Naive thymus-derived CD4-positive, alpha-beta T cell (primary cell): ENCODE measurements at regions of chr11 and their contacts with region 1.

Region 1: DNA sequence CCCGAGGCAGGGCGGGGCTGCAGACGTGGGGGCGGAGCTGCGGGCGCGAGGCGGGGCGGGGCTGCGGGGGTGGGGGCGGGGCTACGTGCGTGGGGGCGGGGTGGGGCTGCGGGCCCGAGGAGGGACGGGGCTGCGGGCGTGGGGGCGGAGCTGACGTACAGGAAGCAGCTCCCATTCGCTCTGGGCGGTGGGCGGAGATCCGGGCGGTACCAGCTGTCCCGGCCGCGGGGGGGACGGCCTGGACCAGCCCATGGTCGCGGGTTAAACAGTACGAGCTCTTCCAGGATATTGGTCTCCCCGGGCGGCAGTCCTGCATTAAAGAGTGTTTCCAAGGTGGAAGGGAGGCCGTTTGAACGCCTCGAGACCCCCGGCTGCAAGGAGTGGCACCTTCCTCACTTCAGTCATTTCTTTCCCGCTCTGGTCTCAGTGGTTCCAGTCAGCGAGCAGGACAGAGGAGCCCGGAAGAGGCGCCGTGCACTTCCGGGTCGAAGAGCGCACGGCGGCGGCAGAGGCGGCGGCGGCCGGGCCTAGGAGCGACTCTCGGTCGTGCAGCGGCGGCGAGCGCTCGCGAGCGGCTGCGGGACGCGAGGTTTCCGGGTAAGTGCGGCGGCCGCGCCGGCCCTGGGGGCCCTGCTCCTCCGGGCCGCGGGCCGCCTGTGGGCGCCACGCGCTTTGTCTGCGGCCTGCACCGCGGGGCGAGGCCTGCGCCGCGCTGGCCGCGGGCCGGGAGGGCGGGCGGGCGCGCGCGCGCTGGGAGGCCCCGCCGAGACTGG is at the start of gene PHRF1:
- DNase-seq: peak; percentile 93 to 99 (median 97)
- ATAC-seq: peak; percentile 93
- H3K4me3 ChIP-seq: peak within 1 kb of the TSS; percentile 98
- H3K4me3 Mint-ChIP-seq: peak within 1 kb of the TSS; percentile 93 to 99 (median 98)
- H3K27ac ChIP-seq: peak within 1 kb of the TSS; percentile 98
- H3K27ac Mint-ChIP-seq: peak within 1 kb of the TSS; percentile 96 to 100 (median 99)
- H3K4me1 ChIP-seq: peaks cover 26 to 44% of the 10 kb centered on the region in 2 donors
- H3K4me1 Mint-ChIP-seq: peaks cover 42 to 60% (median 46%) of the 10 kb centered on the region in 7 donors
- H3K27me3 ChIP-seq: no peaks in the 10 kb centered on the region
- H3K27me3 Mint-ChIP-seq: peaks cover 0 to 9% (median 0%) of the 10 kb centered on the region in 5 donors
- total RNA-seq, gene PHRF1: 47.3 to 55.2 (median 49.4) TPM

Region 2: DNA sequence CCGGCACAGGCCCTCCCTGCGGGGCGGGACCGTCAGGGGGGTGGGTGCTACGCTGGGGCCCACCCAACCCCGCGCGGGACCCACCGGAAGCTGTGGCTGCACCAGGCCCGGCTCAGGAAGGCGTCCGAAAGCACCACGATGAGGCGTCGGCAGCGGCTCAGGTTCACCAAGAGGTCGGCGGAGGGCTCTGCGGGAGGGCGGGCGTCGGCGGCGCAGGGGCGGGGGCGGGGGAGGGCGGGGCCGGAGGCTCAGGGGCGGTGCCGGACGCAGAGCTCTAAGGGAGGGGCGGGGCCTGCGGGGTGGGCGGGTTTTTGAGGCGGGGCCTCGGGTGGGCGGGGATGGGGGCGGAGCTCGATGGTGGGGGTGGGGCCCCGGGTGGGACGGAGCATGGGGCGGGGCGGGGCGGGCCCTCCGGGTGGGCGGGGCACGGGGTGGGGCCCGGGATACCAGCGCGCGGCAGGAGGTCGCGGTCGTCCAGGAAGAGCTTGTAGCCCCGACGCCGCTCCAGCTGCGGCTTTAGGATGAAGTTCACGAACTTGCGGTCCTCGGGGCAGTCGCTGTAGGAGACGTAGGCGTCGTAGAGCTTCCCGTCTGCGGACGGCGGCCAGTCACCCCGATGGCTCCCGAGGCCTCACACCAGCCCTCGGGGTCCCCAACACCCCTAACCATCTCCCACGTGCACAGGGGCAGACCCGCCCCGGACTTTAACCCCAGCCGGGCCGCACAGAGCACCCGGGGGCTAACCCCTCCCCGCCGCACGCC is 169.0 kb before region 1 on chr11:
- CTCF ChIA-PET with region 1: no interaction called
- POLR2A ChIA-PET with region 1: no interaction called
- intact Hi-C with region 1: loop called in 1 of 2 experiments (anchors 1 kb)
- DNase-seq: peak; percentile 80 to 93 (median 92)
- ATAC-seq: peak; percentile 90
- H3K4me3 ChIP-seq: no peak overlapping the region
- H3K4me3 Mint-ChIP-seq: peak overlapping the region in 6 of 10 donors; percentile 12 to 60 (median 38)
- H3K27ac ChIP-seq: peak overlapping the region; percentile 75
- H3K27ac Mint-ChIP-seq: peak overlapping the region in 7 of 9 donors; percentile 21 to 85 (median 51)
- H3K4me1 ChIP-seq: peaks cover 9 to 13% of the 10 kb centered on the region in 2 donors
- H3K4me1 Mint-ChIP-seq: peaks cover 4 to 21% (median 6%) of the 10 kb centered on the region in 7 donors
- H3K27me3 ChIP-seq: no peaks in the 10 kb centered on the region
- H3K27me3 Mint-ChIP-seq: no peaks in the 10 kb centered on the region

Region 3: GRCh38 chr11:544837-545166 is 31.4 kb before region 1 on chr11:
- CTCF ChIA-PET with region 1: no interaction called
- POLR2A ChIA-PET with region 1: no interaction called
- intact Hi-C with region 1: no loop called
- DNase-seq: no peak
- ATAC-seq: no peak
- H3K4me3 ChIP-seq: no peak overlapping the region
- H3K4me3 Mint-ChIP-seq: no peak overlapping the region
- H3K27ac ChIP-seq: no peak overlapping the region
- H3K27ac Mint-ChIP-seq: no peak overlapping the region
- H3K4me1 ChIP-seq: no peaks in the 10 kb centered on the region
- H3K4me1 Mint-ChIP-seq: peaks cover 0 to 4% (median 0%) of the 10 kb centered on the region in 7 donors
- H3K27me3 ChIP-seq: no peaks in the 10 kb centered on the region
- H3K27me3 Mint-ChIP-seq: no peaks in the 10 kb centered on the region

Region 4: DNA sequence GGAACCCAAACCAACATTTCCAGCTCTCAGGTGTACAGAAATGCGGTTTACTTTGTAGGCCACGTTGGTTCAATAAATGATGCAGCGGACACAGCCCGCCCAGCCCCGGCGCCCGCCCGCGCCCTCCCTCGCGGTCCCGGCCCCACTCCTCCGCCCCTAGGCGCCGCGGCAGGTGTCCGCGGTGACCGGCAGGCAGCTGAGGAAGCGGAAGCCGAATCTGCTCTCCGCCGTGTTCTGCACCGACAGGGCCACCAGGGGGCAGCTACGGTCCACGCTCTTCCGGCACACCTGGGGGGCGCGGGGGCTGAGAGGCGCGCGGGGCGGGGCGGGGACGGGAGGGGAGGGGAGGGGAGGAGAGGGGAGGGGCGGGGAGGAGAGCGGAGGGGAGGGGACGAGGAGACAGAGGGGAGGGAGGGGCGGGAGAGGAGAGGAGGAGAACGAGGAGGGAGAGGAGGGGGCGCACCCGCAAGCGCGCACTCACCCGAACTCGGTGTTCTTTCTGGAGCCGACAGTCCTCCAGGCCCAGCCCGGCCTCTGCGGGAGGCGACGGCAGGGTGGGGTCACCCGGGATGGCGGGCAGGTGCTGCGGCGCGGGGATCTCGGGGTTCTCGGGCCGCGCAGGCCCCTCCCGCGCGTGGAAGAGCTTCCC is 21.2 kb before region 1 on chr11:
- CTCF ChIA-PET with region 1: interaction called, 8 read pairs
- POLR2A ChIA-PET with region 1: interaction called, 16 read pairs
- intact Hi-C with region 1: loop called (anchors 1 kb)
- DNase-seq: peak; percentile 60 to 80 (median 72)
- ATAC-seq: peak; percentile 89
- H3K4me3 ChIP-seq: peak overlapping the region; percentile 46
- H3K4me3 Mint-ChIP-seq: peak overlapping the region in 7 of 10 donors; percentile 36 to 69 (median 57)
- H3K27ac ChIP-seq: peak overlapping the region; percentile 44
- H3K27ac Mint-ChIP-seq: no peak overlapping the region
- H3K4me1 ChIP-seq: peaks cover 9 to 16% of the 10 kb centered on the region in 2 donors
- H3K4me1 Mint-ChIP-seq: peaks cover 3 to 8% (median 7%) of the 10 kb centered on the region in 7 donors
- H3K27me3 ChIP-seq: no peaks in the 10 kb centered on the region
- H3K27me3 Mint-ChIP-seq: peaks cover 0 to 18% (median 0%) of the 10 kb centered on the region in 5 donors

Region 5: GRCh38 chr11:587978-588380 is 11.8 kb after region 1 on chr11:
- CTCF ChIA-PET with region 1: interaction called, 3 read pairs
- POLR2A ChIA-PET with region 1: interaction called, 8 read pairs
- intact Hi-C with region 1: loop called (anchors 1 kb)
- DNase-seq: peak; percentile 34 to 91 (median 78)
- ATAC-seq: peak; percentile 93
- H3K4me3 ChIP-seq: peak overlapping the region; percentile 16
- H3K4me3 Mint-ChIP-seq: peak overlapping the region; percentile 63 to 90 (median 76)
- H3K27ac ChIP-seq: peak overlapping the region; percentile 65
- H3K27ac Mint-ChIP-seq: peak overlapping the region; percentile 95 to 100 (median 99)
- H3K4me1 ChIP-seq: peaks cover 10 to 12% of the 10 kb centered on the region in 2 donors
- H3K4me1 Mint-ChIP-seq: peaks cover 9 to 38% (median 29%) of the 10 kb centered on the region in 7 donors
- H3K27me3 ChIP-seq: no peaks in the 10 kb centered on the region
- H3K27me3 Mint-ChIP-seq: no peaks in the 10 kb centered on the region

Region 6: GRCh38 chr11:760236-760635 is 184.1 kb after region 1 on chr11:
- CTCF ChIA-PET with region 1: no interaction called
- POLR2A ChIA-PET with region 1: no interaction called
- intact Hi-C with region 1: no loop called
- DNase-seq: no peak
- ATAC-seq: no peak
- H3K4me3 ChIP-seq: no peak overlapping the region
- H3K4me3 Mint-ChIP-seq: no peak overlapping the region
- H3K27ac ChIP-seq: no peak overlapping the region
- H3K27ac Mint-ChIP-seq: peak overlapping the region in 1 of 9 donors; percentile 29
- H3K4me1 ChIP-seq: no peaks in the 10 kb centered on the region
- H3K4me1 Mint-ChIP-seq: peaks cover 0 to 6% (median 0%) of the 10 kb centered on the region in 7 donors
- H3K27me3 ChIP-seq: no peaks in the 10 kb centered on the region
- H3K27me3 Mint-ChIP-seq: no peaks in the 10 kb centered on the region

Region 7: DNA sequence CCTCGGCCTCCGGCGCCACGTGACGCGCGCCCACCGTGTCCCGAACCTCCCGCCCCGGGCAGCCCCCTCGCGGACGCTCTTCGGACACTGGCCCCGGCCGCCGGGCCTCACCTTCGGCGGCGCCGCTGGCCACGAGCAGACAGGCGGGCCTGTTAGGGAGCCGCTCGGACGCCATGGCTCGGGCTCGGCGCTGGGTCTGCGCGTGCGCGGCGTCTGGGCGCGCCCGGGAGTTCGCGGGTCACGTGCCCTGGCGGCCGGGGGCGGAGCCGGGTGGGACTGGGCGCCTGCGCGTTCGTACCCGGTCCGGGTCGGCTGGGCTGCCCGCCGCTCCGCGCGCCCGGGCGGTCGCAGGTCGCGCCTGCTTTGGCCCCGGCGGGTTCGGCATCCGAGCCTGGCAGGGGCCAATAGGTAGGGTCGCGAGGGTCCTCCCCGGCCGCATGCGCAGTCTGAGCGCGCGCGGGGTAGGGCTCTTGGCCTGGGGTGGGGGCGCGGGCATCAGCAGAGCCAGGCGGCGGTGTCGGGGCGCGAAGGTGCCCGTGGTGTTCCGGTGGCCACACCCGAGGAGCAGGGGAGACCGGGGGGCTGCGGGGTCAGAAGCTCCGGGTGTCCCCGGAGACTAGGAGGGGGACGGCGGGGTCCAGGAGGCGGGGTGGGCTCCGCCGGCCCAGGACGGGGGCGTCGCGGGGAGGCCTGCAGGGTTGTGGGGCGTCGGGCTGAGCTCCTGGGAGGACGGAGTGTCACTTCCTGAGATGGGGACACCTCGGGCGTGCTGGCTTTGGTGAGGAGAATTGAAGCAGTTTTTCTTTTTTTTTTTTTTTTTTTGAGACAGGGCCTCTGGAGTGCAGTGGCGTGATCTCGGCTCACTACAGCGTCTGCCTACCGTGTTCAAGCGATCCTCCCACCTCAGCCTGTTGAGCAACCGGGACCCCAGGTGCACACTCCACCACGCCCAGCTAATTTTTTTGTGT is 201.4 kb after region 1 on chr11 and contains the start of gene GATD1:
- CTCF ChIA-PET with region 1: no interaction called
- POLR2A ChIA-PET with region 1: no interaction called
- intact Hi-C with region 1: loop called in 1 of 2 experiments (anchors 2 kb)
- DNase-seq: peak; percentile 86 to 99 (median 93)
- ATAC-seq: peak; percentile 93
- H3K4me3 ChIP-seq: peak within 1 kb of the TSS; percentile 59
- H3K4me3 Mint-ChIP-seq: peak within 1 kb of the TSS; percentile 72 to 91 (median 83)
- H3K27ac ChIP-seq: peak within 1 kb of the TSS; percentile 85
- H3K27ac Mint-ChIP-seq: peak within 1 kb of the TSS; percentile 40 to 92 (median 78)
- H3K4me1 ChIP-seq: peaks cover 12 to 14% of the 10 kb centered on the region in 2 donors
- H3K4me1 Mint-ChIP-seq: peaks cover 7 to 29% (median 23%) of the 10 kb centered on the region in 7 donors
- H3K27me3 ChIP-seq: no peaks in the 10 kb centered on the region
- H3K27me3 Mint-ChIP-seq: no peaks in the 10 kb centered on the region
- total RNA-seq, gene GATD1: 37.8 to 59.2 (median 52.9) TPM

Region 8: DNA sequence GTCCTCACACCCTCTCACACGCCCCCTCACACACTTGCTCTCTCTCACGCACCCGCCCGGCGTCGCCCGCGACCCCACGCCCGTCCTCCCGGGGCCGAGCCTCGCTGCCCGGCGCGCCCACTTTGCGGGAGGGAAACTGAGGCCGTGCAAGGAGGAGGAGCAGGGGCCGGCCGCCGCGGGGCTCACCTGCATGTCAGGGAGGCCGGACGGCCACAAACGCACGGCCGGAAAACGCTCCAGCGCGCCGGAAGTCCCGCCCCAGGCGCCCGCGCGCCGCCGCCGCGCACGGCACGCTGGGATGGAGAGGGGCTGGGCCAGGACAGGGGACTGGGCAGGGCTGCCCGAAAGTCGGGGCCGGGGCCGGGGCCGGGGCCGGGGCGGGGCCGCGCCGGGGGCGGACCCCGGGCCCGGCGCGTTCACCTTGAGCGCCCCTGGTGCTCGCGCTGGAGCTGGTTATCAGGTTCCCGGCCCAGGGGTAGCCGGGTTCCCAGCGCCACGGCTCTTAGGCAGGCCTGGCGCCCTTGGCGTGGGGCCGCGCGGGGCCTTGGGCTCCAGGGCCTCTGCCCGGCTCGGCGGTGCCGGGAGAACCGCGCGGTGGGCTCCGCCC is 334.5 kb after region 1 on chr11 and contains the start of gene CHID1:
- CTCF ChIA-PET with region 1: no interaction called
- POLR2A ChIA-PET with region 1: no interaction called
- intact Hi-C with region 1: loop called in 1 of 2 experiments (anchors 2 kb)
- DNase-seq: peak; percentile 60 to 94 (median 73)
- ATAC-seq: peak; percentile 98
- H3K4me3 ChIP-seq: peak within 1 kb of the TSS; percentile 68
- H3K4me3 Mint-ChIP-seq: peak within 1 kb of the TSS; percentile 82 to 99 (median 90)
- H3K27ac ChIP-seq: peak within 1 kb of the TSS; percentile 79
- H3K27ac Mint-ChIP-seq: peak within 1 kb of the TSS; percentile 73 to 97 (median 86)
- H3K4me1 ChIP-seq: peaks cover 4 to 10% of the 10 kb centered on the region in 2 donors
- H3K4me1 Mint-ChIP-seq: peaks cover 15 to 24% (median 20%) of the 10 kb centered on the region in 7 donors
- H3K27me3 ChIP-seq: no peaks in the 10 kb centered on the region
- H3K27me3 Mint-ChIP-seq: no peaks in the 10 kb centered on the region
- total RNA-seq, gene CHID1: 30.8 to 56.3 (median 53.0) TPM